ENCODE measurements at regions of chr14 and their contacts with region 1.

Region 1: GRCh38 chr14:30270200-30271161 is 288.5 kb upstream of the G2E3 start:
- DNase-seq: peak; percentile 61
- H3K4me3 ChIP-seq: peak overlapping the region; percentile 33
- H3K27ac ChIP-seq: no peak overlapping the region
- H3K27me3 ChIP-seq: no peaks in the 10 kb centered on the region
- CTCF ChIP-seq: peak; percentile 96

Region 2: GRCh38 chr14:29788093-29788492 is 482.4 kb before region 1 on chr14:
- CTCF ChIA-PET with region 1: no interaction called
- POLR2A ChIA-PET with region 1: no interaction called
- DNase-seq: no peak
- H3K4me3 ChIP-seq: no peak overlapping the region
- H3K27ac ChIP-seq: no peak overlapping the region
- H3K27me3 ChIP-seq: no peaks in the 10 kb centered on the region
- CTCF ChIP-seq: no peak

Region 3: GRCh38 chr14:30223385-30223813 is 47.1 kb before region 1 on chr14:
- CTCF ChIA-PET with region 1: interaction called, 82 read pairs
- POLR2A ChIA-PET with region 1: no interaction called
- DNase-seq: peak; percentile 87
- H3K4me3 ChIP-seq: no peak overlapping the region
- H3K27ac ChIP-seq: peak overlapping the region; percentile 23
- H3K27me3 ChIP-seq: no peaks in the 10 kb centered on the region
- CTCF ChIP-seq: no peak

Region 4: GRCh38 chr14:30243805-30244204 is 26.7 kb before region 1 on chr14:
- CTCF ChIA-PET with region 1: interaction called, 14 read pairs
- POLR2A ChIA-PET with region 1: no interaction called
- DNase-seq: peak; percentile 20
- H3K4me3 ChIP-seq: no peak overlapping the region
- H3K27ac ChIP-seq: no peak overlapping the region
- H3K27me3 ChIP-seq: no peaks in the 10 kb centered on the region
- CTCF ChIP-seq: no peak

Region 5: DNA sequence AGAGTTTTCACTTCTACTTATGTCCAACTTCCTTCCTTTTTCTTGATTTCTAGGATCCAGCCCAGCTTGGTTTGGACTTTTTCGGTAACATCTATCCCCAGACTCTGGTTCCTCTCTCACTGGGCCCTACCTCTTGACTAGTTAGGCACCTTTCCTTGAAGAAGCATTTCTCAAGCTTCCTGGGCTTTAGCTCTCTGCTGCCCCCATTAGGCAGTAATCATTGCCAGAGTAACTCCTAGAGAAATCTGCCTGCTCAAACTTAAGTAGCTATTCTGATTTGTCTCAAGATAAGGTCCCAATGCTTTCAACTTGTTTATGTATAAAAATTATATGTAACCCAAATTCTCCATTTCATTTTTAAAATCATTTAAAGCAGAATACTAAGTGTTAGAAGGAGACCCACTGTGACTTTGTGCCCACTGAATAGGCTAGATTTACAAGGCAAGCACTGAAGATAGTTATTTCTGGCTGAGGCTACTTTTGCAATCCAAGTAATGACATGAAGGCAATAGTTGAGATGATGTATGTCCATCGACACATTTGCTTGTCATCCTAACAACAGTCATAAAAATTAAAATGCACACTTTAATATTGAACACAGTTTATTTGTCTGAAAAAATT is 13.5 kb after region 1 on chr14:
- CTCF ChIA-PET with region 1: interaction called, 233 read pairs
- POLR2A ChIA-PET with region 1: no interaction called
- DNase-seq: no peak
- H3K4me3 ChIP-seq: no peak overlapping the region
- H3K27ac ChIP-seq: no peak overlapping the region
- H3K27me3 ChIP-seq: no peaks in the 10 kb centered on the region
- CTCF ChIP-seq: peak; percentile 95

Region 6: DNA sequence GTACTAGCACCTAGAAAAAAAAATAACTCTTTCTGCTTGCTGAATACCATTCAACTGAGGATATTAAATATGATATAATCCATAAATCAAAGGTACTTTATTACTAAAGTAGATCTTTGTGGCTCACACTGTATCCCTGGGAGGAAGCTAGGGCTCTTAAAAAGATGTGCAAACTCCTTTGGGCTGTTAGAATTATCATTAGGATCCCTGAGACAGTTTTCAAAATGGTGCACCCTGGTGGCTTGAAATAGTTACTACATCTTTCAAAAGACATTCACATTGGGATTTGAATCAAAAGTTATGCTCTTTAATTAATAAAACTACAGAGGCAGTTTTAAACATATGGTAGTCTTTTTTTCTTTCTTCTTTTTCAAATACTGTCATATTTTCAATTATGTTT is 60.0 kb after region 1 on chr14:
- CTCF ChIA-PET with region 1: no interaction called
- POLR2A ChIA-PET with region 1: no interaction called
- DNase-seq: no peak
- H3K4me3 ChIP-seq: no peak overlapping the region
- H3K27ac ChIP-seq: no peak overlapping the region
- H3K27me3 ChIP-seq: no peaks in the 10 kb centered on the region
- CTCF ChIP-seq: peak; percentile 50

Region 7: GRCh38 chr14:30443368-30444007 is 173.0 kb after region 1 on chr14:
- CTCF ChIA-PET with region 1: interaction called, 13 read pairs
- POLR2A ChIA-PET with region 1: no interaction called
- DNase-seq: no peak
- H3K4me3 ChIP-seq: no peak overlapping the region
- H3K27ac ChIP-seq: no peak overlapping the region
- H3K27me3 ChIP-seq: no peaks in the 10 kb centered on the region
- CTCF ChIP-seq: peak; percentile 54

Measured in AG04450 (cell line).